ENCODE measurements at regions of chr2 and their contacts with region 1.

Region 1: GRCh38 chr2:20015472-20016083 is 3.1 kb upstream of the MATN3 start:
- DNase-seq: no peak
- ATAC-seq: no peak
- H3K4me3 Mint-ChIP-seq: no peak overlapping the region
- H3K27ac Mint-ChIP-seq: no peak overlapping the region
- H3K4me1 Mint-ChIP-seq: peaks cover 12% of the 10 kb centered on the region
- H3K27me3 Mint-ChIP-seq: peaks cover 34% of the 10 kb centered on the region

Region 2: DNA sequence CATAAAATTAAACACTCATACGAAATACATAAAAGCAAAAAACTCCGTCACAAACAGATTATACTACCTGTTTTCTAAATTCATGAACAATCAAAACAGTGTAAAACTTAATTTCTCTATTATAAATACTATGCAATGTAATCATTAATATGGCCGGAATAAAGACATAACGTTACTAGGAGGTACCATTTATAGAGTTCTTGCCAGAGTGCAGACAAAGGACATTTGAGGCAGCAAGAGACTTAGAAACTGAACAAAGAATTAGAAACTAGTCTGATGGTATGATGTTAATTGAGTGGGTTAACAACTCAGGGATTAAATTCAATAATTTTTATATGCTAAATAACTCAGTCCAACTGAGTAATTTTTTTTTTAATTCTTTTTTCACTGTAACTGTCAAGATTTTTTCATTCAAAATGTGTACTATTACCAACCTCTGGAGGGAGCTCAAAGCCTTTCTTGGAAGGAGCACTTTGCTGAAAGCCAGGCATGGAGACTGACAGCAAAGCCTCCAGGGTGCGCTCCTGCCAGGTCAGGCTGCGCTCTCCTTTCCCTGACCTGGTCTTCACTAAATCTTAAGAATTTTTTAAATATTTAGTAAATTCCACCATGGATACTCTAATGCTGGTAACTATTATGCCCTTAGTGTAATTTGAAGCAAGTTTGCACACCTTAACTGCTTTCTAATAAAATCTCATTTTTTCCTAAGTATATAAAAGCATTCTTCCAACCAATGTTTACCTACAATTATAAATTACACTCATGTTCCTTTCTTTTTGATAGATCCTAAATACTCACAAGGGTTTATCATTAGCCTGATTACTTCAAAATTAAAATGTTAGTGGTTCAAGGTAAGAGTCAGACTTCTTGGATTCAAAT is 59.8 kb before region 1 on chr2:
- CTCF ChIA-PET with region 1: interaction called, 17 read pairs
- POLR2A ChIA-PET with region 1: no interaction called
- DNase-seq: peak; percentile 69
- ATAC-seq: peak; percentile 89
- H3K4me3 Mint-ChIP-seq: no peak overlapping the region
- H3K27ac Mint-ChIP-seq: no peak overlapping the region
- H3K4me1 Mint-ChIP-seq: no peaks in the 10 kb centered on the region
- H3K27me3 Mint-ChIP-seq: no peaks in the 10 kb centered on the region

Region 3: DNA sequence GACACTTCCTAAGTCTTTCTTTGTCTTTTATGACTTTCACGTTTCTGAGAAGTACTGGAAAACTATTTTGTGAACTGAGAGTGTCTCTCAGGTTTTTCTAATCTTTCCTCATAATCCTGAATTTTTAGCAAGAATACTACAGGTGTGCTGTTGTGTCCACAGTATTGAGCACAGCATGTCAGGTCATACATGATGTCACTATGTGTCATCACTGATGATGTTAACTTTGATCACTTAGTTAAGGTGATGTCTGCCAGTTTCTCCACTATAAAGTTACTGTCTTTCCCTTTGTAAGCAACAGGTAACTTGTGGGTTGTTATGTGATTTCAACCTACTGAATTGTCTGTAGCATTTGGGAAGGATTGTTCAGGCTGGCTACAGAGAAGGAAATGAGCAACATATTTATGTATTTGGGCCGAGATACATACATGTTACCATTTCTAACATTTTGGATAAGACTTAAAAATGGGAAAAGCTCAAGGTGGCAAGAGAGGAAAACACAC is 14.2 kb before region 1 on chr2:
- CTCF ChIA-PET with region 1: interaction called, 27 read pairs
- POLR2A ChIA-PET with region 1: no interaction called
- DNase-seq: no peak
- ATAC-seq: no peak
- H3K4me3 Mint-ChIP-seq: no peak overlapping the region
- H3K27ac Mint-ChIP-seq: no peak overlapping the region
- H3K4me1 Mint-ChIP-seq: no peaks in the 10 kb centered on the region
- H3K27me3 Mint-ChIP-seq: peaks cover 26% of the 10 kb centered on the region

Region 4: GRCh38 chr2:20042531-20042930 is 27.0 kb after region 1 on chr2:
- CTCF ChIA-PET with region 1: interaction called, 12 read pairs
- POLR2A ChIA-PET with region 1: interaction called, 3 read pairs
- DNase-seq: no peak
- ATAC-seq: no peak
- H3K4me3 Mint-ChIP-seq: no peak overlapping the region
- H3K27ac Mint-ChIP-seq: no peak overlapping the region
- H3K4me1 Mint-ChIP-seq: no peaks in the 10 kb centered on the region
- H3K27me3 Mint-ChIP-seq: no peaks in the 10 kb centered on the region

Region 5: GRCh38 chr2:20093263-20094141 is 77.9 kb after region 1 on chr2:
- CTCF ChIA-PET with region 1: interaction called, 34 read pairs
- POLR2A ChIA-PET with region 1: no interaction called
- DNase-seq: no peak
- ATAC-seq: no peak
- H3K4me3 Mint-ChIP-seq: no peak overlapping the region
- H3K27ac Mint-ChIP-seq: no peak overlapping the region
- H3K4me1 Mint-ChIP-seq: no peaks in the 10 kb centered on the region
- H3K27me3 Mint-ChIP-seq: no peaks in the 10 kb centered on the region

Measured in activated CD8-positive, alpha-beta T cell treated with anti-CD3 and anti-CD28 coated beads, Interleukin-2, amount 10 ng/mL, durations not matched to agents 7 days and 5 days (primary cell).